ENCODE measurements at regions of chrX and their contacts with region 1.

Region 1: GRCh38 chrX:103686199-103687072 is at the start of gene MORF4L2:
- DNase-seq: peak; percentile 84 to 94 (median 88)
- ATAC-seq: peak; percentile 92
- H3K4me3 ChIP-seq: peak within 1 kb of the TSS; percentile 63
- H3K27ac ChIP-seq: peak within 1 kb of the TSS; percentile 99
- H3K4me1 ChIP-seq: peaks cover 0 to 4% of the 10 kb centered on the region in 2 experiments; a peak in 3 of 5 replicates
- H3K27me3 ChIP-seq: no peaks in the 10 kb centered on the region
- CTCF ChIP-seq: no peak
- EP300 ChIP-seq: peak; percentile 31; the same call in 1 of the 2 replicates
- POLR2A ChIP-seq: peak; percentile 94
- RAD21 ChIP-seq: no peak
- polyA plus RNA-seq, gene MORF4L2: 420 to 476 TPM

Region 2: DNA sequence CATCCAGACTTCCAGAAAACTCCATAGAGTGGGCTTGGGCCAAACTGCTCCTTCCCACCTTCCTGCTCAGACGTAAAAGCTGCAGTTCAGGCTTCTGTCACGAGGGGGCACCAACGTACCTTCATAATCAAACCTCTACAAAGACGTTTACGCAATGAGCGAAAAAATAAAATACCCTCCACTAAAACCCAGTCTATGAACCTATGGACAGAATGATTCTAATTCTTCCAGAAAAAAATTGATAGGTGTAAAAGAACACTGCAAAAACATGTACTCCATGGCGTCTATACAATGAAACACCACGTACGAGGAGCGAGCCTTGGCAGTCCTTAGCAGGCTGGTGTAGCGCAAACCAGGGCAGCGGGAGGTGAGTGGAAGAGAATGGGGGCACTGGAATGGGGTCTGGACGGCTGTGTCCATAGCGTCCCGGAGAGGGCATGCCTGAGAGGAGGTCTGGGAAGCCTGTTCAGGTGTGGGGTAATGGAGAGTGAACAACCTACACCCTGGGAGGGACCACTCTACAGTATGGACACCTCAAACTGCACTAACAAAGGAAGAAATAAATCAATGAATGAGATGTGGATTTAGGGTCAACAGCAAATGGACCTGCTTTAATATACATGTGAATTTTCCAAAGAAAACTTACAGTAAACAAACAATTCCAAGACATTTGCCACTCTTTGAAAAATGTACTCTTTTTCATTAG is 152.8 kb before region 1 on chrX:
- CTCF ChIA-PET with region 1: no interaction called
- POLR2A ChIA-PET with region 1: interaction called, 3 read pairs
- in situ Hi-C with region 1: no loop called
- intact Hi-C with region 1: loop called (anchors 1 kb)
- DNase-seq: peak; percentile 16 to 71 (median 39)
- ATAC-seq: peak; percentile 84
- H3K4me3 ChIP-seq: no peak overlapping the region
- H3K27ac ChIP-seq: no peak overlapping the region
- H3K4me1 ChIP-seq: no peaks in the 10 kb centered on the region
- H3K27me3 ChIP-seq: no peaks in the 10 kb centered on the region
- CTCF ChIP-seq: peak; percentile 61 to 76 (median 73)
- EP300 ChIP-seq: no peak
- POLR2A ChIP-seq: no peak
- RAD21 ChIP-seq: peak; percentile 59 to 79

Region 3: DNA sequence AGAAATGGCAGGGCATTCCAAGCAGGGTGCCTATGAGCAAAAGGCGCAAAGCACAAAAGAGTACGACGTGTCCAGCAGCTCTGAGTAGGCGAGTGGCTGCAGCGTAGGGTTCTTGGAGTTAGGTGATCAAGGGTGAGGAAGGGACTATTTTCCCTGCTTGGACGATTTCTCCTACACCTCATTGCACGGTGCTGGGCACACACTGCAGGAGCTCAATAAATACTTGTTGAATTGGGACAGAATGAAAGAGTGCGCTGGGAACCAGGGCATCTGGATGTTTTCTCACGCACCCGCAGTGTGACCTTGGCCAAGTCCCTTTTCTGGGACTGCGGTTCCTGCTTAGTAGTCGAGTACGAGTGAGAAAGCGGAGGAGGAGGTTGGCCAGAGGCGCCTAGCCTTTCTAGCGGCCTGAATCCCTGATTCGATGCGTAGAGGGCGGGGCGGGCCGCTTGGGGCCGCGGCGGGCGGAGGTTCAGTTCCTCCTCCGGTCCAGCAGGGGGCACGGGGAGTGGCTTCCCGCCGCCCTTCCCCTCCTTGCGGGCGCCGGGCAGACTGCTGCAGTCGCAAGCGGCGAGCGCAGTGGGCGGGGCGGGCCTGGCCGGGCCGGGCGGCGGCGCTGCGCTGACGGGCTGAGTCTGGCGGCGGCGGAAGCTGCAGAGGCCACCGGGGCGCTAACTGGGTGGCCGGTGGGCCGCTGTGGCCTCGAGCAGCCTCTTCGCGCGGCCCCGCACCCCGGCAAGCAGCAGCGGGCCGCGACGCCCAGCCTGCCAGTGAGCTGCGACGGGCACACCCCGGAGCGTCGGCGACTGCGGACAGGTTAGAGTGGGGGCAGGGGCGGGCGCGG is 479.7 kb after region 1 on chrX and contains the start of gene FAM199X:
- CTCF ChIA-PET with region 1: no interaction called
- POLR2A ChIA-PET with region 1: no interaction called
- in situ Hi-C with region 1: no loop called
- intact Hi-C with region 1: loop called (anchors 10 kb)
- DNase-seq: peak; percentile 83 to 91 (median 90)
- ATAC-seq: peak; percentile 97
- H3K4me3 ChIP-seq: peak within 1 kb of the TSS; percentile 83
- H3K27ac ChIP-seq: peak within 1 kb of the TSS; percentile 81
- H3K4me1 ChIP-seq: peaks cover 0 to 7% of the 10 kb centered on the region in 2 experiments; a peak in 4 of 5 replicates
- H3K27me3 ChIP-seq: no peaks in the 10 kb centered on the region
- CTCF ChIP-seq: peak; percentile 57 to 93 (median 63)
- EP300 ChIP-seq: no peak
- POLR2A ChIP-seq: peak; percentile 79
- RAD21 ChIP-seq: no peak; a peak in 1 of 4 replicates
- polyA plus RNA-seq, gene FAM199X: 4.6 to 5.6 TPM

Measured in K562 (cell line).